IMR-90 (cell line): ENCODE measurements at regions of chr1 and their contacts with region 1.

Region 1: GRCh38 chr1:87131809-87132283 is 196.8 kb upstream of the LMO4 start:
- DNase-seq: peak; percentile 64
- ATAC-seq: peak; percentile 96
- H3K4me3 ChIP-seq: peak overlapping the region; percentile 34
- H3K27ac ChIP-seq: peak overlapping the region; percentile 21; the same call in 1 of the 2 replicates
- H3K4me1 ChIP-seq: peaks cover 6% of the 10 kb centered on the region; the same call in 1 of the 2 replicates
- H3K27me3 ChIP-seq: peaks cover 2% of the 10 kb centered on the region; the same call in 1 of the 2 replicates
- CTCF ChIP-seq: peak; percentile 96
- POLR2A ChIP-seq: no peak
- RAD21 ChIP-seq: peak; percentile 97

Region 2: GRCh38 chr1:87159378-87159915 is 27.6 kb after region 1 on chr1:
- CTCF ChIA-PET with region 1: no interaction called
- POLR2A ChIA-PET with region 1: no interaction called
- dilution Hi-C with region 1: no loop called
- in situ Hi-C with region 1: no loop called
- intact Hi-C with region 1: no loop called
- DNase-seq: no peak
- ATAC-seq: no peak
- H3K4me3 ChIP-seq: no peak overlapping the region
- H3K27ac ChIP-seq: no peak overlapping the region
- H3K4me1 ChIP-seq: no peaks in the 10 kb centered on the region
- H3K27me3 ChIP-seq: peaks cover 8% of the 10 kb centered on the region
- CTCF ChIP-seq: no peak
- POLR2A ChIP-seq: no peak
- RAD21 ChIP-seq: no peak

Region 3: GRCh38 chr1:87501738-87502137 is 369.9 kb after region 1 on chr1:
- CTCF ChIA-PET with region 1: no interaction called
- POLR2A ChIA-PET with region 1: no interaction called
- dilution Hi-C with region 1: no loop called
- in situ Hi-C with region 1: no loop called
- intact Hi-C with region 1: loop called (anchors 10 kb)
- DNase-seq: peak; percentile 8
- ATAC-seq: no peak
- H3K4me3 ChIP-seq: no peak overlapping the region
- H3K27ac ChIP-seq: no peak overlapping the region
- H3K4me1 ChIP-seq: no peaks in the 10 kb centered on the region
- H3K27me3 ChIP-seq: no peaks in the 10 kb centered on the region
- CTCF ChIP-seq: no peak
- POLR2A ChIP-seq: no peak
- RAD21 ChIP-seq: no peak

Region 4: GRCh38 chr1:88061492-88062177 is 929.8 kb after region 1 on chr1:
- CTCF ChIA-PET with region 1: no interaction called
- POLR2A ChIA-PET with region 1: no interaction called
- dilution Hi-C with region 1: no loop called
- in situ Hi-C with region 1: loop called (anchors 25 kb)
- intact Hi-C with region 1: loop called (anchors 5 kb)
- DNase-seq: peak; percentile 70
- ATAC-seq: peak; percentile 96
- H3K4me3 ChIP-seq: no peak overlapping the region
- H3K27ac ChIP-seq: no peak overlapping the region
- H3K4me1 ChIP-seq: no peaks in the 10 kb centered on the region
- H3K27me3 ChIP-seq: no peaks in the 10 kb centered on the region
- CTCF ChIP-seq: peak; percentile 96
- POLR2A ChIP-seq: no peak
- RAD21 ChIP-seq: peak; percentile 82

Region 5: GRCh38 chr1:88291611-88292354 is 1159.9 kb after region 1 on chr1:
- CTCF ChIA-PET with region 1: no interaction called
- POLR2A ChIA-PET with region 1: no interaction called
- dilution Hi-C with region 1: no loop called
- in situ Hi-C with region 1: loop called (anchors 10 kb)
- intact Hi-C with region 1: no loop called
- DNase-seq: no peak
- ATAC-seq: no peak
- H3K4me3 ChIP-seq: no peak overlapping the region
- H3K27ac ChIP-seq: no peak overlapping the region
- H3K4me1 ChIP-seq: no peaks in the 10 kb centered on the region
- H3K27me3 ChIP-seq: no peaks in the 10 kb centered on the region
- CTCF ChIP-seq: no peak
- POLR2A ChIP-seq: no peak
- RAD21 ChIP-seq: no peak

Region 6: GRCh38 chr1:88595355-88596002 is 1463.6 kb after region 1 on chr1:
- CTCF ChIA-PET with region 1: no interaction called
- POLR2A ChIA-PET with region 1: no interaction called
- dilution Hi-C with region 1: no loop called
- in situ Hi-C with region 1: no loop called
- intact Hi-C with region 1: loop called (anchors 10 kb)
- DNase-seq: peak; percentile 57
- ATAC-seq: peak; percentile 68
- H3K4me3 ChIP-seq: no peak overlapping the region
- H3K27ac ChIP-seq: no peak overlapping the region
- H3K4me1 ChIP-seq: no peaks in the 10 kb centered on the region
- H3K27me3 ChIP-seq: no peaks in the 10 kb centered on the region
- CTCF ChIP-seq: peak; percentile 60
- POLR2A ChIP-seq: no peak
- RAD21 ChIP-seq: peak; percentile 64